Adrenal gland (tissue), 19 donors: ENCODE measurements at regions of chr18 and their contacts with region 1.

Region 1: GRCh38 chr18:61901323-61901986 is 8.6 kb upstream of the RNF152 start:
- DNase-seq: peak; percentile 35 to 74 (median 55)
- H3K4me3 ChIP-seq: no peak overlapping the region
- H3K27ac ChIP-seq: no peak overlapping the region
- H3K4me1 ChIP-seq: no peaks in the 10 kb centered on the region
- H3K27me3 ChIP-seq: no peaks in the 10 kb centered on the region
- CTCF ChIP-seq: peak; percentile 84 to 93 (median 87)
- POLR2A ChIP-seq: no peak

Region 2: GRCh38 chr18:61551586-61551985 is 349.9 kb before region 1 on chr18:
- intact Hi-C with region 1: loop called in 1 of 2 experiments (anchors 10 kb)
- DNase-seq: peak; percentile 34 to 70 (median 60)
- H3K4me3 ChIP-seq: no peak overlapping the region
- H3K27ac ChIP-seq: no peak overlapping the region
- H3K4me1 ChIP-seq: peaks cover 0 to 4% of the 10 kb centered on the region in 2 donors
- H3K27me3 ChIP-seq: no peaks in the 10 kb centered on the region
- CTCF ChIP-seq: peak; percentile 69 to 88 (median 82)
- POLR2A ChIP-seq: no peak

Region 3: GRCh38 chr18:61797696-61798590 is 103.5 kb before region 1 on chr18:
- intact Hi-C with region 1: no loop called
- DNase-seq: no peak
- H3K4me3 ChIP-seq: no peak overlapping the region
- H3K27ac ChIP-seq: no peak overlapping the region
- H3K4me1 ChIP-seq: no peaks in the 10 kb centered on the region
- H3K27me3 ChIP-seq: no peaks in the 10 kb centered on the region
- CTCF ChIP-seq: no peak
- POLR2A ChIP-seq: no peak

Region 4: DNA sequence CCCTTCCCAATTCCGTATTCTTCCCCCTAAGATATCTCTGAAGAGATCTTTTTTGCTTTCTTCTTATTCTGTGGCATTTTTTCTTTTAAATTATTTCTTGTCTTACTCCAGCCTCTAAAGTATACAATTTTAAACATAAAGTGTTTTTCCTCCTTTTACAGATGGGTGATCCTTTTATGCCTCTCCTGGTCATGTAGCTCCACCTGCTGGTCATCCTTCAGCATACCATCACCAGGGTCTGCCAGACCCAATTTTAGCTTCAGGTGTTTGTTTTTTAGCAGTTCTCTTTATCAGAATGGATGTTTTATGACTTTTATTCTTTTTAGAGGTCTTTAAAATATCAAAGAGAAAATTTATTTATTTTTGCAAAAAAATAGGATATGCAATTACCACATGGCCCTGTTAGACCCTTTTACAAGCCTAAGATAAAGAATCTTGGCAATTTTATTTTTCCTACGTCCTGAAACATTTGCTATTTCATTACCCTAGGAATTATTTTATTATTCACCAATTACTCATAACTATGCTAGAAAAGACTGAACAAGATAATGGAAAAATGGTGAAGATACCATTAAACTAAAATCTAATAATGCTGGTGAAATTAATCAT is 229.9 kb after region 1 on chr18:
- intact Hi-C with region 1: loop called (anchors 10 kb)
- DNase-seq: peak; percentile 48 to 74 (median 54)
- H3K4me3 ChIP-seq: no peak overlapping the region
- H3K27ac ChIP-seq: no peak overlapping the region
- H3K4me1 ChIP-seq: no peaks in the 10 kb centered on the region
- H3K27me3 ChIP-seq: no peaks in the 10 kb centered on the region
- CTCF ChIP-seq: peak; percentile 72 to 98 (median 92)
- POLR2A ChIP-seq: no peak